AG04449 (cell line): ENCODE measurements at regions of chr16 and their contacts with region 1.

Region 1: GRCh38 chr16:57899771-57900661 is 70.9 kb downstream of the CNGB1 start:
- DNase-seq: no peak
- H3K4me3 ChIP-seq: no peak overlapping the region
- CTCF ChIP-seq: peak; percentile 84

Region 2: DNA sequence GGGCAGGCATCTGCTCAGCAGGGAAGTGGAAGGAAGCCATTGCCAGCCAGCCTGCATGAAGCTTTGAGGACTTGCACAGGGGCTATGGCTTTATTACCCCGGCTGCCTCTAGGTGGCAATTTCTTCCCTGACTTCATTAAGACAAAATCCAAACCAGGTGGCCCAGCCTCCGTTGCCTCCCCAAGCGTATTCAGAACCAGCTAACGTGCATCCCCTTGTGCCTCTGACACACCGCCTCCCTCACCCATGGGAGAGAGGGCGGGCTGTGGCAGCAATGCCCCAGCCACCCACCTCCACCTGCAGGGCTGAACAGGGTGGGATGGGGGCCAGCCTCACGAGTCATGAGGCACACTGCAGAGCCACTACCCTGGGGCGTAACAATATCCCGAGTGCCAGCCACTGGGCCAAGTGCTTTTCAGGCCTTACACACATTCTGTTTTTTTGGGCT is 104.6 kb before region 1 on chr16:
- CTCF ChIA-PET with region 1: interaction called, 10 read pairs
- POLR2A ChIA-PET with region 1: no interaction called
- DNase-seq: no peak
- H3K4me3 ChIP-seq: no peak overlapping the region
- CTCF ChIP-seq: peak; percentile 51

Region 3: GRCh38 chr16:57810197-57811031 is 89.6 kb before region 1 on chr16:
- CTCF ChIA-PET with region 1: no interaction called
- POLR2A ChIA-PET with region 1: no interaction called
- DNase-seq: peak; percentile 36
- H3K4me3 ChIP-seq: no peak overlapping the region
- CTCF ChIP-seq: no peak

Region 4: DNA sequence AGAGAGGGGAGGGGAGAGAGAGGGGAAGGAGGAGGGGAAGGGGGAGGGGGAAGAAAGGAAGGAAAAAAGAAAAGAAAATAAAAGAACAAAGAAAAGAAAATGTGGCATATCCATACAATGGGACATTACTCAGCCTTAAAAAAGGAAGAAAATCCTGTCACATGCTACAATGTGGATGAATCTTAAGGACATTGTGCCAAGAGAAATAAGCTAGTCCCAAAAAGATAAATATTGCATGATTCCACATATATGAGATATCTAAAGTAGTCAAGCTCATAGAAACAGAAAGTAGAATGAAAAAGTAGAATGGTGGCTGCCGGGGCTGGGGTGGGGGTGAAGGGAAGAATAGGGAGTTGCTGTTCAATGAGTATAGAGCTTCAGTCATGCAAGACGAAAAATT is 30.5 kb after region 1 on chr16:
- CTCF ChIA-PET with region 1: interaction called, 11 read pairs
- POLR2A ChIA-PET with region 1: no interaction called
- DNase-seq: no peak
- H3K4me3 ChIP-seq: no peak overlapping the region
- CTCF ChIP-seq: no peak

Region 5: GRCh38 chr16:58000706-58001676 is 101.0 kb after region 1 on chr16 and contains the start of gene USB1:
- CTCF ChIA-PET with region 1: interaction called, 161 read pairs
- POLR2A ChIA-PET with region 1: no interaction called
- DNase-seq: no peak
- H3K4me3 ChIP-seq: peak within 1 kb of the TSS; percentile 93
- CTCF ChIP-seq: peak; percentile 63

Region 6: DNA sequence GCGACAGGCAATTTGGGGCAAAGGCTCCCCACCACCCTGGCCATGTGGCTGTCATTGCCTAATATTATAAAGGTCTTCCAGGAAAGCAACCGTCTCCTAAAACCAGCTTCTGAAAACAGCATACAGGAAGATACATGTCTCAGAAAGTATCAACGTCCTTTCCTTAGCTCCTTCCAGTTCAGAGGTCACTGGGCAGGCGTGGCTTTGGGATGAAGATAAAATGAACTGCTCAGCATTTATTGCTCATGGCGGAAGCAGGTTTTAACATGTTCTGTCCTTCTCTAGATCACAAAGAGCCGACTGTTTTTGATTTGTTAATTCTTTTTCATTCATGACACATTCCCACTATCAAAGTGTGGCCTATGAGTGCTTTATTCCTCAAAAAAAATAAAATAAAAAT is 221.1 kb after region 1 on chr16:
- CTCF ChIA-PET with region 1: interaction called, 20 read pairs
- POLR2A ChIA-PET with region 1: no interaction called
- DNase-seq: no peak
- H3K4me3 ChIP-seq: no peak overlapping the region
- CTCF ChIP-seq: no peak